CD4-positive, alpha-beta T cell (primary cell): ENCODE measurements at regions of chr1 and their contacts with region 1.

Region 1: DNA sequence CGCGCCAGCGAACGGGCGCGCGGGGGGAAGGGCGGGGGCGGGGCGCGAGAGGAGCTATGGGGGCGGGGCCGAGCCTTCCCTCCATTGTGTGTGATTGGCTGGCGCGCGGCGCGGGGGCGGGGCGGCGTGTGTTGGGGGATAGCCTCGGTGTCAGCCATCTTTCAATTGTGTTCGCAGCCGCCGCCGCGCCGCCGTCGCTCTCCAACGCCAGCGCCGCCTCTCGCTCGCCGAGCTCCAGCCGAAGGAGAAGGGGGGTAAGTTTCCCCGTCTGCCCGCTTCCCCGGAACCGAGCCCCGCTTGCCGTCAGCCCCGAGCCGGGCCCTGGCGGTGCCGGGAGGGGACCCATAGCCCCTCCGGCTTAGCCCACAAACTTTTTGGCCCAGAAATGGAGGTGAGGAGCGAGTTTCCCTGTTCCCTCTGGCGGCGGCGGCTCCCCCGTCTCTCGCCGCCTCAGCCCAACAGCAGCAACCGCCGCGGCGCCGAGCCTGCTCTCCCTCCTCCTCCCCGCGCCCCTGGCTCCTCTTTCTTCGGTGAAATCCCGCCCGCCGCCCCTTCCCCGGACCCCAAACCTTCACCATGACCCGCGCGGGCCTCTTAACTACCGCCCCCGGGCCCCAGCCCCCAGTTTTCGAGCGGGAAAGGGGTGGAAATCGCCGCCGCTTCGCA is at the start of gene H3-3A:
- DNase-seq: peak; percentile 97 to 100 (median 98)
- ATAC-seq: peak; percentile 78
- H3K4me3 ChIP-seq: peak within 1 kb of the TSS; percentile 90
- H3K4me3 Mint-ChIP-seq: peak within 1 kb of the TSS; percentile 100
- H3K27ac ChIP-seq: peak within 1 kb of the TSS; percentile 89 to 97
- H3K27ac Mint-ChIP-seq: peak within 1 kb of the TSS; percentile 99
- H3K4me1 ChIP-seq: peaks cover 24% of the 10 kb centered on the region
- H3K4me1 Mint-ChIP-seq: peaks cover 62% of the 10 kb centered on the region
- H3K27me3 ChIP-seq: no peaks in the 10 kb centered on the region
- H3K27me3 Mint-ChIP-seq: no peaks in the 10 kb centered on the region
- CTCF ChIP-seq: no peak
- total RNA-seq, gene H3-3A: 372 to 380 TPM

Region 2: GRCh38 chr1:225428068-225428880 is 634.4 kb before region 1 on chr1:
- CTCF ChIA-PET with region 1: no interaction called
- POLR2A ChIA-PET with region 1: interaction called, 40 read pairs
- intact Hi-C with region 1: loop called in 1 of 2 experiments (anchors 5 kb)
- DNase-seq: peak; percentile 83 to 96 (median 90)
- ATAC-seq: peak; percentile 89
- H3K4me3 ChIP-seq: peak overlapping the region; percentile 94
- H3K4me3 Mint-ChIP-seq: peak overlapping the region; percentile 90
- H3K27ac ChIP-seq: peak overlapping the region; percentile 84 to 85
- H3K27ac Mint-ChIP-seq: peak overlapping the region; percentile 84
- H3K4me1 ChIP-seq: peaks cover 33% of the 10 kb centered on the region
- H3K4me1 Mint-ChIP-seq: peaks cover 47% of the 10 kb centered on the region
- H3K27me3 ChIP-seq: no peaks in the 10 kb centered on the region
- H3K27me3 Mint-ChIP-seq: no peaks in the 10 kb centered on the region
- CTCF ChIP-seq: no peak

Region 3: DNA sequence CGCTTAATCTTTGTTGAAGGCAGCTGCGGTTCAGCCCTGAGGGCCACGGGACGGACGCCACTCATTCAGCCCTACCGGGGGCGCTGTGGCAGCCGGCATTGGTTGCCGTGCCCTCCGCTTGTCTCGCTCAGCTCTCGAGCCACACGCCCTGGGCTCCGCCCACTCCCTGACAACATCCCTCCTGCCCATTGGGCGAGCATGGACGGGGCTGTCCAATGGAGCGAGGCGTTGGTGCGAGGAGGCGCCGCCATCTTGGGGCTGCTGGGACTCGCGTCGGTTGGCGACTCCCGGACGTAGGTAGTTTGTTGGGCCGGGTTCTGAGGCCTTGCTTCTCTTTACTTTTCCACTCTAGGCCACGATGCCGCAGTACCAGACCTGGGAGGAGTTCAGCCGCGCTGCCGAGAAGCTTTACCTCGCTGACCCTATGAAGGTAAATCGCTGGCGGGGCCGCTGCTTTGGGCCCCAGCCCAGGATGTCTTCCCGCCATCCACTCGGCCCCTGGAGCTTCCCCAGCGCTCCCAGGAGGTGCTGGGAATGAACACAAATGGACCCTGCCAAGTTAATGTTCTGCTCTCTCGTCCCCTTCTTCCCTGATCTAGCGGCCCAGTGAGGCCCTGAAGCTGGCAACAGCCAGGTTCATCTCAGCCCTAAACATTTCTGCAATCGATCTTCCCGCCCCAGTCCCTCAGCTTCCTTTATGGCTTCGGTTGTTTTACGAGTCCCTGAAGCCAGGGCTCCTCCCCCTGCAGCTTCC is 284.9 kb before region 1 on chr1 and contains the start of gene SRP9:
- CTCF ChIA-PET with region 1: interaction called, 5 read pairs
- POLR2A ChIA-PET with region 1: interaction called, 48 read pairs
- intact Hi-C with region 1: loop called (anchors 2 to 5 kb)
- DNase-seq: peak; percentile 98 to 100 (median 99)
- ATAC-seq: peak; percentile 90
- H3K4me3 ChIP-seq: peak within 1 kb of the TSS; percentile 68
- H3K4me3 Mint-ChIP-seq: no peak within 1 kb of the TSS
- H3K27ac ChIP-seq: peak within 1 kb of the TSS; percentile 95 to 97
- H3K27ac Mint-ChIP-seq: no peak within 1 kb of the TSS
- H3K4me1 ChIP-seq: peaks cover 42% of the 10 kb centered on the region
- H3K4me1 Mint-ChIP-seq: peaks cover 15% of the 10 kb centered on the region
- H3K27me3 ChIP-seq: no peaks in the 10 kb centered on the region
- H3K27me3 Mint-ChIP-seq: no peaks in the 10 kb centered on the region
- CTCF ChIP-seq: peak; percentile 86
- total RNA-seq, gene SRP9: 63.7 to 69.8 TPM

Region 4: GRCh38 chr1:225987491-225988316 is 75.0 kb before region 1 on chr1:
- CTCF ChIA-PET with region 1: interaction called, 16 read pairs
- POLR2A ChIA-PET with region 1: interaction called, 27 read pairs
- intact Hi-C with region 1: no loop called
- DNase-seq: peak in 3 of 14 experiments; percentile 50 to 66 (median 66)
- ATAC-seq: peak; percentile 62
- H3K4me3 ChIP-seq: no peak overlapping the region
- H3K4me3 Mint-ChIP-seq: no peak overlapping the region
- H3K27ac ChIP-seq: no peak overlapping the region
- H3K27ac Mint-ChIP-seq: peak overlapping the region; percentile 69
- H3K4me1 ChIP-seq: peaks cover 8% of the 10 kb centered on the region
- H3K4me1 Mint-ChIP-seq: peaks cover 29% of the 10 kb centered on the region
- H3K27me3 ChIP-seq: no peaks in the 10 kb centered on the region
- H3K27me3 Mint-ChIP-seq: no peaks in the 10 kb centered on the region
- CTCF ChIP-seq: peak; percentile 80

Region 5: GRCh38 chr1:226083302-226084101 is 20.8 kb after region 1 on chr1:
- CTCF ChIA-PET with region 1: interaction called, 23 read pairs
- POLR2A ChIA-PET with region 1: interaction called, 49 read pairs
- intact Hi-C with region 1: no loop called
- DNase-seq: peak; percentile 83 to 96 (median 90)
- ATAC-seq: peak; percentile 94
- H3K4me3 ChIP-seq: peak overlapping the region; percentile 77
- H3K4me3 Mint-ChIP-seq: peak overlapping the region; percentile 91
- H3K27ac ChIP-seq: peak overlapping the region in 1 of 2 donors; percentile 7
- H3K27ac Mint-ChIP-seq: peak overlapping the region; percentile 39
- H3K4me1 ChIP-seq: peaks cover 19% of the 10 kb centered on the region
- H3K4me1 Mint-ChIP-seq: peaks cover 10% of the 10 kb centered on the region
- H3K27me3 ChIP-seq: no peaks in the 10 kb centered on the region
- H3K27me3 Mint-ChIP-seq: no peaks in the 10 kb centered on the region
- CTCF ChIP-seq: no peak

Region 6: DNA sequence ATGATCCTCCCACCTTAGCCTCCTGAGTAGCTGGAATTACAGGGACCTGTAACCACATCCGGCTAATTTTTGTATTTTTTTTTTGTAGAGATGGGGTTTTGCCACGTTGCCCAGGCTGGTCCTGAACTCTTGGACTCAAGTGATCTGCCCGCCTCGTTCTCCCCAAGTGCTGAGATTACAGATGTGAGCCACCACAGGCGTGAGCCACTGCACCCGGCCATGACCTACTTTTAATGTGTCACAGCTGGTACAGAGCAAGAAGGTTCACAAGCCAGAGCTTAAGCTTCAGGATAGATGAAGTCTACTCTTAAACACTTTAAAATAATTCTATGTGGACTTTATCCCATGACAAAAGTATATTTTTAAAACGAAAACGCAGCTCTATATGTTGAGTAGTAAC is 100.2 kb after region 1 on chr1:
- CTCF ChIA-PET with region 1: no interaction called
- POLR2A ChIA-PET with region 1: no interaction called
- intact Hi-C with region 1: no loop called
- DNase-seq: no peak
- ATAC-seq: no peak
- H3K4me3 ChIP-seq: no peak overlapping the region
- H3K4me3 Mint-ChIP-seq: no peak overlapping the region
- H3K27ac ChIP-seq: no peak overlapping the region
- H3K27ac Mint-ChIP-seq: no peak overlapping the region
- H3K4me1 ChIP-seq: no peaks in the 10 kb centered on the region
- H3K4me1 Mint-ChIP-seq: no peaks in the 10 kb centered on the region
- H3K27me3 ChIP-seq: no peaks in the 10 kb centered on the region
- H3K27me3 Mint-ChIP-seq: no peaks in the 10 kb centered on the region
- CTCF ChIP-seq: no peak

Region 7: DNA sequence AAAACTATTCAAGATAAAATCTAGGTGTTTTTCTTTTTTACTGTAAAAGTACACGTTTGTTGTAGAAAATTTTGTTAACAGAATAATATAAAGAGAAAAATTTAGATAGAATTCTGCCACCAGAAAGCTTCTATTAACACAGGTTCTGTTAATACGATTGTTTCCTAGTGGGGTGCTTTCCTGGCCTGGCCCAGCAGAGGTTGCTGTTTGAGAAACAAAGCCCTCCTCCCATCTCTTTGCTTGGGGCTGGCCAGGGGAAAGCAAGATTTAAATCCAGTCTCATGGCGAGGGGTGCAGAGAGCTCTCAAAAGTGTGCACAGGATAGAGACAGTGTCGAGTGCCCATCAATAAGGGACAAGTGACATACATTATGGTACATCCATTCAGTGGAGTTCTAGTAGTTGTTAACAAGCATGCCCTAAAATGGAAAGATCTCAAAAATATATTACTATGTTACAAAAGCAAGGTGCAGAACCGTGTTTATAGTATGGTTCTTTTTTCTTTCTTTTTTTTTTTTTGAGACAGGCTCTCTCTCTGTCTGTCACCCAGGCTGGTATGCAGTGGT is 138.4 kb after region 1 on chr1:
- CTCF ChIA-PET with region 1: interaction called, 5 read pairs
- POLR2A ChIA-PET with region 1: interaction called, 6 read pairs
- intact Hi-C with region 1: loop called in 1 of 2 experiments (anchors 2 kb)
- DNase-seq: peak in 1 of 14 experiments; percentile 15
- ATAC-seq: no peak
- H3K4me3 ChIP-seq: no peak overlapping the region
- H3K4me3 Mint-ChIP-seq: no peak overlapping the region
- H3K27ac ChIP-seq: no peak overlapping the region
- H3K27ac Mint-ChIP-seq: no peak overlapping the region
- H3K4me1 ChIP-seq: no peaks in the 10 kb centered on the region
- H3K4me1 Mint-ChIP-seq: no peaks in the 10 kb centered on the region
- H3K27me3 ChIP-seq: no peaks in the 10 kb centered on the region
- H3K27me3 Mint-ChIP-seq: peaks cover 29% of the 10 kb centered on the region
- CTCF ChIP-seq: no peak